ENCODE measurements at regions of chr16 and their contacts with region 1.

Region 1: GRCh38 chr16:85010931-85011845 is at the start of gene ZDHHC7:
- DNase-seq: peak; percentile 80 to 82
- ATAC-seq: peak; percentile 93
- H3K4me3 ChIP-seq: peak within 1 kb of the TSS; percentile 83 to 90 (median 86)
- H3K27ac ChIP-seq: peak within 1 kb of the TSS; percentile 90 to 98 (median 96)
- H3K4me1 ChIP-seq: peaks cover 48 to 49% of the 10 kb centered on the region in 2 donors
- H3K27me3 ChIP-seq: peaks cover 0 to 6% (median 0%) of the 10 kb centered on the region in 3 donors
- CTCF ChIP-seq: no peak
- POLR2A ChIP-seq: peak; percentile 91 to 92
- total RNA-seq, gene ZDHHC7: 55.0 to 93.5 (median 68.4) TPM

Region 2: GRCh38 chr16:85027349-85027957 is 16.3 kb after region 1 on chr16 and contains the start of gene KIAA0513:
- in situ Hi-C with region 1: no loop called
- intact Hi-C with region 1: loop called (anchors 2 kb)
- DNase-seq: peak; percentile 88 to 89
- ATAC-seq: peak; percentile 83 to 85
- H3K4me3 ChIP-seq: peak within 1 kb of the TSS; percentile 76 to 94 (median 86)
- H3K27ac ChIP-seq: peak within 1 kb of the TSS; percentile 80 to 94 (median 92)
- H3K4me1 ChIP-seq: peaks cover 22 to 31% of the 10 kb centered on the region in 2 donors
- H3K27me3 ChIP-seq: no peaks in the 10 kb centered on the region
- CTCF ChIP-seq: peak in 4 of 5 experiments; percentile 29 to 56 (median 38)
- POLR2A ChIP-seq: peak; percentile 96 to 97
- total RNA-seq, gene KIAA0513: 8.2 to 22.4 (median 21.4) TPM

Measured in gastrocnemius medialis (tissue), 4 donors.